SK-N-SH (cell line): ENCODE measurements at regions of chr3 and their contacts with region 1.

Region 1: DNA sequence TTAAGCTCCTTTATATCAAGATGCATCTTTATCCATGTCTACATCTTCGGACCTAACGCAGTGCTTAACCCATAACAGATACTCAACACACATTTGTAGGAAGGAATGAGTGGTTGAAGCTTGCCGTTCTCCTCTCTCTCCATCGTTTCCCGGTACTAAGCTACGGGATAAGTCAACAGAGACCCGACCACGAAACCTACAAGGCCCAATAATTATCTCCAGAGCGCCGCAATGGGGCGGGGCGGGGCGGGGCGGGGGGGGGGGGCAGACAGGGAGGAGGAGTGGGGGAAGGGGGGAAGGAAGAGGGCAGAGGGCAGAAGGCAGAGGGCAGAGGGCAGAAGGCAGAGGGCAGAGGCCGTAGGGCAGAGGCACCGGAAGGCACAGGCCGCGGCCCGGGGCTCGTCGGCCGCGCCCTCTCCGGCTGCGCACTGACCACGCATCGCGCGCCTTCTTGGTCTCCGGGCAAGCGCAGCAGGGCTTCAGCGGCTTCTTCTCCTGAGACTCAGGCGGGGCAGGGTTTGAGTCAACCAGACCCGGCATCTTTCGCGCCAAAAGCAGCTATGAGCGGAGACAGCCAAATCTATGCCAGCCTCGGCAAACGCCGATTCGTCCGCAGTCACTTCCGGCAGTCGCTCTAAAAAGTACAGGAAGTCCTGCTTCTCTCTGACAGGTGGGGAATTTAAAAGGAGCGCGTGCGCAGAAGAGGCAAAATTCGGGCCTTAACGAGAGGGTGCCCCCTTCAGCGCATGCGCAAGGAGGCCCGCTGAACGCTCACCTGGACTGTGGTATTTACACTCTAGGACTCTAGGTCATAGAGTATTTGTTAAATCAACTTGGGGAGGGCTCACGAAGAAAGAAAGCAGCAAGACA is at the start of gene COX17:
- DNase-seq: peak; percentile 62
- H3K4me3 ChIP-seq: peak within 1 kb of the TSS; percentile 50 to 52
- H3K27ac ChIP-seq: peak within 1 kb of the TSS; percentile 29 to 81
- H3K4me1 ChIP-seq: peaks cover 0 to 27% of the 10 kb centered on the region in 2 experiments; a peak in 2 of 4 replicates
- H3K27me3 ChIP-seq: no peaks in the 10 kb centered on the region
- CTCF ChIP-seq: no peak
- EP300 ChIP-seq: no peak
- RAD21 ChIP-seq: no peak; the same call in 1 of the 2 replicates
- polyA plus RNA-seq, gene COX17: 15.1 and 21.5 TPM in 2 replicates

Region 2: DNA sequence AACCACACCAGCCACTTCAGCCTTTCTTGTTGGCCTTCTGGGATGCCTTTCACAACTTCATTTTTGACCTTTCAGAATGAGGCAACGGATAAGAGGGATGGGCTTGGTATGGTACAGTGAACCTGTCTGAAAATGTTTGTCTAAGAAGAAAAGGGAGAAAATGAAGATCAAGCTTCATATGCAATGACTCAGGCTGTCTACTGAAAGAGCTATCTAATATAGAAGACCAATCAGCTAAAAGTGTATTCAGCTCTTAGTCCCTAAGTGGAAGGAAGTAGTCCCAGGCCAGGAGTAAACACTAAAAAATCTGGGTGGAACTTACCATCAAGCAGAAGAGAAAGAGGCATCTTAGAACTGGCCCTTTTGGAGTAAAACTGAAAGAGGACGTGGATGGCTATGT is 515.8 kb before region 1 on chr3:
- CTCF ChIA-PET with region 1: no interaction called
- POLR2A ChIA-PET with region 1: no interaction called
- DNase-seq: no peak
- H3K4me3 ChIP-seq: no peak overlapping the region
- H3K27ac ChIP-seq: no peak overlapping the region
- H3K4me1 ChIP-seq: no peaks in the 10 kb centered on the region
- H3K27me3 ChIP-seq: no peaks in the 10 kb centered on the region
- CTCF ChIP-seq: no peak
- EP300 ChIP-seq: no peak
- RAD21 ChIP-seq: no peak

Region 3: DNA sequence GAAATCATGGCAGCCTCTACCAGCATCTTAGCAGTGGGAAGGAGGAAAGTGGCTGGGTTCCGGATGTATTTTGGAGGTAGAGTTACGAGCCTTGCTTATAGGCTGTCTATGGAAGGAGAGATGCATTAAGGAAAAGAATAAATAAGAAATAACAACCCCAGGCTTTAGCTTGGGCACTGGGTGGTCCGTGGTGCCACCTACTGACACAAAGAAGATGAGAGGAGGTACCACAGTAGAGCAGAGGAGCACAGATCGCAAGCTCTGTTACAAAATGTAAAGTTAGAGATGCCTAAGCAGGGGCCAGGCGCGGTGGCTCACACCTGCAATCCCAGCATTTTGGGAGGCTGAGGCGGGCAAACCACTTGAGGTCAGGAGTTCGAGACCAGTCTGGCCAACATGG is 288.4 kb before region 1 on chr3:
- CTCF ChIA-PET with region 1: interaction called, 10 read pairs
- POLR2A ChIA-PET with region 1: no interaction called
- DNase-seq: peak; percentile 38
- H3K4me3 ChIP-seq: no peak overlapping the region
- H3K27ac ChIP-seq: no peak overlapping the region; a peak in 1 of 4 replicates
- H3K4me1 ChIP-seq: no peaks in the 10 kb centered on the region; a peak in 1 of 4 replicates
- H3K27me3 ChIP-seq: no peaks in the 10 kb centered on the region
- CTCF ChIP-seq: peak; percentile 39
- EP300 ChIP-seq: no peak
- RAD21 ChIP-seq: peak; percentile 65

Region 4: DNA sequence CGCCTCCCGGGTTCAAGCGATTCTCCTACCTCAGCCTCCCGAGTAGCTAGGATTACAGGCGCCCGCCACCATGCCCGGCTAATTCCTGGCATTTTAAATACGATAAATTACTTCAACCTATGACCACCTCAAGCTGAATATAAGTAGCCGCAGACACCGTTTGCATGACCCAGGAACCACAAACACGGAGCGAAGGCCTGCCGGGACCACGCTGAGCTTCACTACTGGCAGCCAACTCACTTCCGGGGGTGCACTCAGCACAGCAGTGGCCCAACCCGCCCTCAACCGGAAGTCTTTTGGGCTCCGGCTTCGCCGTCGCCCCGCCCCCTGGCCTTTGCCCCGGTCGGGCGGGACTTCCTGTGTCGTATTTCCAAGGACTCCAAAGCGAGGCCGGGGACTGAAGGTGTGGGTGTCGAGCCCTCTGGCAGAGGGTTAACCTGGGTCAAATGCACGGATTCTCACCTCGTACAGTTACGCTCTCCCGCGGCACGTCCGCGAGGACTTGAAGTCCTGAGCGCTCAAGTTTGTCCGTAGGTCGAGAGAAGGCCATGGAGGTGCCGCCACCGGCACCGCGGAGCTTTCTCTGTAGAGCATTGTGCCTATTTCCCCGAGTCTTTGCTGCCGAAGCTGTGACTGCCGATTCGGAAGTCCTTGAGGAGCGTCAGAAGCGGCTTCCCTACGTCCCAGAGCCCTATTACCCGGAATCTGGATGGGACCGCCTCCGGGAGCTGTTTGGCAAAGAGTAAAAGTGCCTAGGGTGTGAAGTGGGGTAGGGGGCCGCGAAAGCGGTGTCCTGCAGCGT is 178.6 kb before region 1 on chr3 and contains the start of gene TIMMDC1:
- CTCF ChIA-PET with region 1: interaction called, 7 read pairs
- POLR2A ChIA-PET with region 1: interaction called, 14 read pairs
- DNase-seq: peak; percentile 93
- H3K4me3 ChIP-seq: peak within 1 kb of the TSS; percentile 77 to 99
- H3K27ac ChIP-seq: peak within 1 kb of the TSS; percentile 93 to 95
- H3K4me1 ChIP-seq: peaks cover 0 to 8% of the 10 kb centered on the region in 2 experiments; a peak in 1 of 4 replicates
- H3K27me3 ChIP-seq: no peaks in the 10 kb centered on the region
- CTCF ChIP-seq: no peak
- EP300 ChIP-seq: no peak
- RAD21 ChIP-seq: peak; percentile 3; the same call in 1 of the 2 replicates
- polyA plus RNA-seq, gene TIMMDC1: 128 and 153 TPM in 2 replicates

Region 5: DNA sequence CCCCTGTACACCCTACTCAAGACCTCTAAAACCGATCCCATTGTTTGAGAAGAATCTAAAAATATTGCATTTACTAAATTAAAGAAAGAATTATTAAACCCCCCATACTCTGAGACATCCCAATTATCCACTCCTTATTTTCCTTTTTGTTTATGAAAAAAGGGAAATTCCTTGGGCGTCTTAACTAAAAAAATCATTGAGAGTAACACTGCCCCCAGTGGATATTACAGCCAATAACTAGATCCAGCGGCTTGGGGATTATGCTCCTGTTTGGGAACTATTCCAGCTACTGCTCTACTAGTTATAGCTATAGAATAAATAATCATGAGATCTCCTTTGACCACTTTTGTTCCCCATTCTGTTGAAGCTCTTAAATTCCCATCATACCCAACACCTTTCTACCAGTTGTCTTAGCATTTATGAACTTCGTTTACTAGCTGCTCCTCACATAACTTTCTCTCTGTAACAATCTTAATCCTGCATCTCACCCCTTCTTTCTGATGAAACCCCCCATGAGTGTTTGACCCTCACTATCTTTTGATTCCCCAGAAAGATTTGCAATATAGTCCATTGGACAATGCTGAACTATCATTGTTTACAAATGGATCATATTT is 13.1 kb after region 1 on chr3:
- CTCF ChIA-PET with region 1: interaction called, 29 read pairs
- POLR2A ChIA-PET with region 1: no interaction called
- DNase-seq: peak; percentile 30
- H3K4me3 ChIP-seq: no peak overlapping the region
- H3K27ac ChIP-seq: no peak overlapping the region
- H3K4me1 ChIP-seq: no peaks in the 10 kb centered on the region
- H3K27me3 ChIP-seq: no peaks in the 10 kb centered on the region
- CTCF ChIP-seq: peak; percentile 65
- EP300 ChIP-seq: no peak
- RAD21 ChIP-seq: peak; percentile 26; the same call in 1 of the 2 replicates